Activated B cell treated with CpG ODN at 0.5 μM for 24 hours (primary cell): ENCODE measurements at regions of chr21 and their contacts with region 1.

Region 1: DNA sequence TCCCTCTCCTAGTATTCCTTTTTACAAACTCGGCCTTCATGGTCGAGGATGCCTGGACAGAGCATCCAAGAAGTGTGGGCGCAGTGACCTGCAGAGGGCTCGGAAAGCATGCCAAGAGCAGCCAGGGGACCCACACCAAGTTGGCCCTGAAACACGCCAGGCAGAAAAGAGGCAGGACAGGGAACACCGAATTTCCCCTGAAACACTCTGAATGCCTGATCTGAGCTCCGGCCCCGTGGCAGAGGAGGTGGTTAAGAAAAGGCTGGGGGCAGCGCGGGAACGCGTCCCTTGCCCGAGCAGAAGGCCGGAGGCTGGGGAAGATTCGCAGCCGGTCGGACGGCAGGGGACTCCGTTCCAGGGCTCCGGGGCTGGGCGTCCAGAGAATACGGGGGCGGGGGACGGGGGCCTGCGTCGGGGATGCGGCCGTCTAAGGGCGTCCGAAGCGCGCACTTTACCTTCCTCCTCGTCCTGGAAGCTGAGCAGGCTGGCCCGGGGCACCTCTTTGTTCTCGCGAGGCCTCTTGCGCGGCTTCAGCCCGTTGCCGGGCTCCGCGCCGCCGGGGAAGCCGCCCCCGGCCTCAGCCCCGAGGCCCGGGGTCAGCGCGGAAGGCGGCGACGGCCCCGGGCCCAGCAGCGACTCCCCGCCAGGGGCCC is 558 bp downstream of the PAXBP1 start:
- DNase-seq: no peak
- ATAC-seq: peak; percentile 37
- H3K4me3 Mint-ChIP-seq: peak overlapping the region; percentile 96
- H3K27ac Mint-ChIP-seq: peak overlapping the region; percentile 88
- H3K4me1 Mint-ChIP-seq: peaks cover 45% of the 10 kb centered on the region
- H3K27me3 Mint-ChIP-seq: peaks cover 2% of the 10 kb centered on the region
- CTCF ChIP-seq: no peak

Region 2: GRCh38 chr21:32392880-32393676 is 377.9 kb before region 1 on chr21 and contains the start of gene URB1:
- CTCF ChIA-PET with region 1: no interaction called
- POLR2A ChIA-PET with region 1: no interaction called
- intact Hi-C with region 1: loop called (anchors 1 kb)
- DNase-seq: peak; percentile 97
- ATAC-seq: peak; percentile 97
- H3K4me3 Mint-ChIP-seq: peak within 1 kb of the TSS; percentile 87
- H3K27ac Mint-ChIP-seq: peak within 1 kb of the TSS; percentile 83
- H3K4me1 Mint-ChIP-seq: peaks cover 41% of the 10 kb centered on the region
- H3K27me3 Mint-ChIP-seq: peaks cover 6% of the 10 kb centered on the region
- CTCF ChIP-seq: no peak
- total RNA-seq, gene URB1: 18.1 and 22.2 TPM in 2 replicates

Region 3: DNA sequence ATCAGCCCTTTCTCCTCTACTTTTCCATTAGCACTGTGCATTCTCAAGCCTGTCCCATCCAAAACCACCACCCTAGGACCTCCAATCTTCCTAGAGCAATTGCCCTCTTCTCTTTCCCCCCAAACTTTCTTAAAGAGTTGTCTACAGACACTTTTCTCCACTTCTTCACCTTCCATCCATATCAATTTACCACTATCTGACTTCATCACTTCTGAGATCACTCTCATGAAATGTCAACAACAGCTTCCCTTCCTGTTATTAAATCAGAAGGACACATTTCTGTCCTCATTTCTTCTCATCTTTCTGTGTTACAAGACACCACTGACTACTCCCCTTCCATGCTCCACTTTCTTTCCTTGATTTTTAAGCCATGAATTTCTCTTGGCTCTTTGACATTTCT is 122.8 kb before region 1 on chr21:
- CTCF ChIA-PET with region 1: no interaction called
- POLR2A ChIA-PET with region 1: interaction called, 10 read pairs
- intact Hi-C with region 1: loop called (anchors 2 kb)
- DNase-seq: no peak
- ATAC-seq: no peak
- H3K4me3 Mint-ChIP-seq: no peak overlapping the region
- H3K27ac Mint-ChIP-seq: no peak overlapping the region
- H3K4me1 Mint-ChIP-seq: no peaks in the 10 kb centered on the region
- H3K27me3 Mint-ChIP-seq: no peaks in the 10 kb centered on the region
- CTCF ChIP-seq: no peak

Region 4: GRCh38 chr21:32687643-32688345 is 83.2 kb before region 1 on chr21:
- CTCF ChIA-PET with region 1: no interaction called
- POLR2A ChIA-PET with region 1: no interaction called
- intact Hi-C with region 1: no loop called
- DNase-seq: no peak
- ATAC-seq: no peak
- H3K4me3 Mint-ChIP-seq: no peak overlapping the region
- H3K27ac Mint-ChIP-seq: no peak overlapping the region
- H3K4me1 Mint-ChIP-seq: no peaks in the 10 kb centered on the region
- H3K27me3 Mint-ChIP-seq: no peaks in the 10 kb centered on the region
- CTCF ChIP-seq: no peak

Region 5: GRCh38 chr21:32698971-32699693 is 71.9 kb before region 1 on chr21:
- CTCF ChIA-PET with region 1: no interaction called
- POLR2A ChIA-PET with region 1: interaction called, 10 read pairs
- intact Hi-C with region 1: no loop called
- DNase-seq: no peak
- ATAC-seq: no peak
- H3K4me3 Mint-ChIP-seq: no peak overlapping the region
- H3K27ac Mint-ChIP-seq: no peak overlapping the region
- H3K4me1 Mint-ChIP-seq: no peaks in the 10 kb centered on the region
- H3K27me3 Mint-ChIP-seq: peaks cover 16% of the 10 kb centered on the region
- CTCF ChIP-seq: no peak

Region 6: DNA sequence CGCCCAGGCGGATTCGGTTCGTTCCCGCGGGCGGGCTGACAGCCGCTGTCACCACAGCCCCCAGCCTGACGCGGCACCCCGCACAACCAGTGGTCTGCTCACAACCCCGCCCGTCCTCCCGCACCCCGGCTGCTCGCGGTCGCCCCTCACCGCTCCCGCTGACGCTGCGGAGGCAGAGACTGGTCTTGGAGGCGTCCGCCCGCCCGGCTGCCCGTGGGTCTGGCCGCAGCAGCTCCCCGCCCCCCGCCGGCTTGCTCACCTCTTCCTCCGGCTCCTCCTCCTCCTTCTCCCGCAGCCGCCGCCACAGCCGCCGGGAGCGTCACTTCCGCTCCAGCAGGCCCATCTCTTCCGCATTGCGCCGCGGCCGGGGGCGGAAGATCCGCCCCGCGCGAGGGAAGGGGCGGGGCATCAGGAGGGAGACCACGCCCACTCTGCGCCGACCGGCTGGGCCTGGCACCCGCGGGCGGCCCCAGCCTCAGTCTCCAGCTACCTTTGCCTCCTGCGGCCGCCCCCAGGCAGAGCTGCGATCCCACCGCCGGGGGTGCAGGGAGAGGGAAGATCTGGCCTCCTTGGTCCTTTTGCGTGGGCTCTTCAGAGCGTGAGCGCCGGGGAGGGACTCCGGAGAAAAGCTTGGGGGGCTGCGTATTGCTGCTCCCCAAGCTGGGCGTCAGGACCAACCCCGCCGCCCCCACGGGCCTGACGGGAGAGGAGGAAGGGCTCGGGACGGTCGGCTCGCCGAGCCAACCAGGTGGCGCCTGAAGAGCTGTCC is 43.1 kb before region 1 on chr21 and contains the start of gene SYNJ1:
- CTCF ChIA-PET with region 1: interaction called, 6 read pairs
- POLR2A ChIA-PET with region 1: interaction called, 55 read pairs
- intact Hi-C with region 1: loop called (anchors 1 kb)
- DNase-seq: peak; percentile 94
- ATAC-seq: peak; percentile 91
- H3K4me3 Mint-ChIP-seq: peak within 1 kb of the TSS; percentile 93
- H3K27ac Mint-ChIP-seq: peak within 1 kb of the TSS; percentile 72
- H3K4me1 Mint-ChIP-seq: peaks cover 14% of the 10 kb centered on the region
- H3K27me3 Mint-ChIP-seq: no peaks in the 10 kb centered on the region
- CTCF ChIP-seq: no peak
- total RNA-seq, gene SYNJ1: 5.2 and 5.4 TPM in 2 replicates